PC-3 (cell line): ENCODE measurements at regions of chr1 and their contacts with region 1.

Region 1: GRCh38 chr1:44036409-44037139 is 5.3 kb upstream of the SLC6A9 start:
- DNase-seq: peak; percentile 87
- ATAC-seq: peak; percentile 73
- H3K4me3 ChIP-seq: no peak overlapping the region
- H3K27ac ChIP-seq: no peak overlapping the region
- H3K4me1 ChIP-seq: peaks cover 41% of the 10 kb centered on the region
- H3K27me3 ChIP-seq: no peaks in the 10 kb centered on the region
- CTCF ChIP-seq: peak; percentile 96

Region 2: DNA sequence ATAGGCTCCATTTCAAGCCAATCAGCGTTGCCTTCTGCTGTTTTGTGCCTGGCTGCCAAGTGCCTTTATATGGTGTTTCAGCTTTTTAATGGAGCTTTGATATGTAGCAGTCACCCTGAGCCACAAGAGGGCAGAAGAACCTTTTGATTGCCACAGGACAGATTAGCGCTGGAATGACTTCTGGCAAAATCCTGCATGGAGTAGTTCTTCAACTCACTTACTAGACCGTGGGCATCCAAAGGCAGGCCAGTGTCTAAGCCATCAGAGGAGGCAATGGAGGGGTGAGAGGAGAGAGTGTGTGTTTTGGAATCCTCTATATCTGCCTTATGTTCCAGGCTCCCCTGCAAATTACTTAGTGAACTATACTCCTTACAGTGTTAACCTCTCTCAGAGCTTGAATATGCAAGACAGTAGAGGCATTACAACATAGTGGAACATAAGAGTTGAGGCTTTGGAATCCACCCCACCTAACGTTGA is 273.0 kb before region 1 on chr1:
- CTCF ChIA-PET with region 1: interaction called, 3 read pairs
- POLR2A ChIA-PET with region 1: no interaction called
- intact Hi-C with region 1: loop called (anchors 5 kb)
- DNase-seq: peak; percentile 93
- ATAC-seq: peak; percentile 99
- H3K4me3 ChIP-seq: no peak overlapping the region
- H3K27ac ChIP-seq: no peak overlapping the region
- H3K4me1 ChIP-seq: peaks cover 8% of the 10 kb centered on the region; the same call in 1 of the 2 replicates
- H3K27me3 ChIP-seq: no peaks in the 10 kb centered on the region
- CTCF ChIP-seq: peak; percentile 95

Region 3: DNA sequence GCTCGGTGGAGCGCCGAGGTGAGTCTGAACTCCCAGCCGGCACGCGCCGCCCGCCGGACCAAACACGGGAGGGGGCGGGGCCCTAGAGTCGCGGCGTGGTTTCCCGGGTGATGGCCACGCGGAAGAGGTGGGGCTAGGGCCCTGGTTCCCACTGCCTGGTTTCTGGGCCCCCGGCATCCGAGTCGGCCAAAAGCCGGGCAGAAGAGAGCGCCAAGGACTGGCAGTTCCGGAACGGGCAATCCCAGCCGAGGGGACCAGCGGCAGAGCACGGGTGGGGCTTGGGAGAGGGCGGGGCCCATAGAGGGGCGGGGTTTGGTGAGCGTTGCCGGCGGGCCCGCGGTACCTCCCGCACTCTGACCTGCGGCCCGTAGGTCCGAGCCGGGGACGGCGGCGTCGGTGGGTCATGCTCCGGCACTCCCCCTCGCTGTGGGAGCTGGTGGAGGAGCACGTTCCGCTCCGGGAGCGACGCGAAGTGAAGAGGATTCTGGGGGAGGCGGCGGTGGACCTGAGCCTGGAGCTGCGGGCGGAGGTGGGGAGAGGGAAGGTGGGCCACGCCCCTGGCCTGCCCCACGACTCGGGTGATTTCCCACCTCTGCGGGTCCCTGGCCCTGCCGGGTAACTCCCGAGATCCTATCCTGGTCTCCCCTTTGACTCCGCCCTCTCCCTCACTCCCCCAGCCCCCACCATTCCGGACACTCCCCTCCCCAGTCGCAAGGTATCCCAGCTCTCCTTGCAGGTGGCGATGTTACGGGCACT is 44.9 kb before region 1 on chr1 and contains the start of gene CCDC24:
- CTCF ChIA-PET with region 1: interaction called, 4 read pairs
- POLR2A ChIA-PET with region 1: interaction called, 8 read pairs
- intact Hi-C with region 1: loop called (anchors 5 kb)
- DNase-seq: peak; percentile 87
- ATAC-seq: peak; percentile 80
- H3K4me3 ChIP-seq: peak within 1 kb of the TSS; percentile 72
- H3K27ac ChIP-seq: peak within 1 kb of the TSS; percentile 66
- H3K4me1 ChIP-seq: peaks cover 19% of the 10 kb centered on the region
- H3K27me3 ChIP-seq: no peaks in the 10 kb centered on the region
- CTCF ChIP-seq: no peak
- total RNA-seq, gene CCDC24: 10.1 and 21.9 TPM in 2 replicates

Region 4: GRCh38 chr1:44002606-44003157 is 33.9 kb before region 1 on chr1:
- CTCF ChIA-PET with region 1: interaction called, 5 read pairs
- POLR2A ChIA-PET with region 1: no interaction called
- intact Hi-C with region 1: loop called (anchors 1 kb)
- DNase-seq: no peak
- ATAC-seq: no peak
- H3K4me3 ChIP-seq: no peak overlapping the region
- H3K27ac ChIP-seq: no peak overlapping the region
- H3K4me1 ChIP-seq: peaks cover 3% of the 10 kb centered on the region; the same call in 1 of the 2 replicates
- H3K27me3 ChIP-seq: no peaks in the 10 kb centered on the region
- CTCF ChIP-seq: peak; percentile 35

Region 5: GRCh38 chr1:44049839-44050238 is 13.3 kb after region 1 on chr1:
- CTCF ChIA-PET with region 1: interaction called, 13 read pairs
- POLR2A ChIA-PET with region 1: no interaction called
- intact Hi-C with region 1: no loop called
- DNase-seq: peak; percentile 96
- ATAC-seq: peak; percentile 60
- H3K4me3 ChIP-seq: peak overlapping the region; percentile 51; the same call in 1 of the 2 replicates
- H3K27ac ChIP-seq: peak overlapping the region; percentile 98
- H3K4me1 ChIP-seq: peaks cover 39% of the 10 kb centered on the region
- H3K27me3 ChIP-seq: no peaks in the 10 kb centered on the region
- CTCF ChIP-seq: no peak

Region 6: GRCh38 chr1:44090429-44091252 is 54.1 kb after region 1 on chr1:
- CTCF ChIA-PET with region 1: no interaction called
- POLR2A ChIA-PET with region 1: no interaction called
- intact Hi-C with region 1: no loop called
- DNase-seq: no peak
- ATAC-seq: no peak
- H3K4me3 ChIP-seq: no peak overlapping the region
- H3K27ac ChIP-seq: no peak overlapping the region
- H3K4me1 ChIP-seq: peaks cover 8% of the 10 kb centered on the region
- H3K27me3 ChIP-seq: no peaks in the 10 kb centered on the region
- CTCF ChIP-seq: no peak

Region 7: GRCh38 chr1:44294588-44295007 is 258.0 kb after region 1 on chr1:
- CTCF ChIA-PET with region 1: no interaction called
- POLR2A ChIA-PET with region 1: no interaction called
- intact Hi-C with region 1: no loop called
- DNase-seq: no peak
- ATAC-seq: no peak; the same call in 1 of the 2 replicates
- H3K4me3 ChIP-seq: no peak overlapping the region
- H3K27ac ChIP-seq: no peak overlapping the region
- H3K4me1 ChIP-seq: no peaks in the 10 kb centered on the region
- H3K27me3 ChIP-seq: no peaks in the 10 kb centered on the region
- CTCF ChIP-seq: peak; percentile 41

Region 8: GRCh38 chr1:44531785-44532566 is 495.4 kb after region 1 on chr1:
- CTCF ChIA-PET with region 1: no interaction called
- POLR2A ChIA-PET with region 1: interaction called, 11 read pairs
- intact Hi-C with region 1: no loop called
- DNase-seq: peak; percentile 93
- ATAC-seq: peak; percentile 99
- H3K4me3 ChIP-seq: no peak overlapping the region
- H3K27ac ChIP-seq: peak overlapping the region; percentile 71
- H3K4me1 ChIP-seq: peaks cover 23% of the 10 kb centered on the region
- H3K27me3 ChIP-seq: no peaks in the 10 kb centered on the region
- CTCF ChIP-seq: no peak

Region 9: DNA sequence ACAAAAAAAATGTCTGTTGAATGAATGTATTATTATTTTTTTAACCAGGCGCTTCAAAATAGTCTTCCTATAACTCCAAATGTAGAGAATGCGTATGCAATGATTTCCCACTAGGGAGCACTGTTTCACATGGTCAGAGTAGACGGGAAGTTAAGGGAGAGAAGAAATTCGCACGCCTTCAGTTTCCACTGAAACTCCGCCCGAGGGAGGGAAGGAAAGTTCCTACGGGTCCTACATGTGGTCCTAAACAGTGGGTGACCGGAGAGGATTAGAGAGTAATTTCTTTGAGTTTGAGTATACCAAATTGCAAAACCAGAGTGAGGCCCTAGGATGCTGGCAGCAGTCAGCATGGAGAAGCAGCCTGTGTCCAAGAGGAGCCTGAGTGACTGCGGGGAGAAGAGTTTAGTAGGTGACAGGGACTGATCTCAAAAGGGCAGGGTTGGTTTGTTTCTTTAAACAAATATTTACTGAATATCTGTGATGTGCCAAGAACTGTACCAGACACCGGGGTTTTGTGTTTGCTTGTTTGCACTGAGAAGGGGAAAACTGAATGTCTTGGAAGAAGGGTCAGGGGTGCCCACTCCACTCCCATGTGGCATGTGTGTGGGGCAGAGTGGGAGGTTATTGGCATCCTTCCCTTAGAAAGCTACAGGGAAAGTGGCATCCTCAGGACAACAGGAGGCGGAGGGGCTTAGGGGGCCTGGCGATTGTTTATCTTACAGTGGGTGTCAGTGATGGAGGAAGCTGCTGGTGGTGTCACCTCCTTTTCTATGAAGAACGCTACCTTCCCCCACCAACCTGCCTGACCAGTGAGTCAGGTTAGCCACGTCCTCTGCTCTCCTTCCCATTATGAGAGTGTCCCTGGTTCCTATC is 671.6 kb after region 1 on chr1:
- CTCF ChIA-PET with region 1: no interaction called
- POLR2A ChIA-PET with region 1: no interaction called
- intact Hi-C with region 1: no loop called
- DNase-seq: peak; percentile 57
- ATAC-seq: no peak
- H3K4me3 ChIP-seq: no peak overlapping the region
- H3K27ac ChIP-seq: peak overlapping the region; percentile 88
- H3K4me1 ChIP-seq: peaks cover 35% of the 10 kb centered on the region
- H3K27me3 ChIP-seq: no peaks in the 10 kb centered on the region
- CTCF ChIP-seq: peak; percentile 51; the same call in 1 of the 2 replicates